ENCODE measurements at regions of chr4 and their contacts with region 1.

Region 1: GRCh38 chr4:122577808-122578781 is 42.8 kb downstream of the IL21 start:
- DNase-seq: peak; percentile 24 to 84 (median 73)
- H3K4me3 ChIP-seq: peak overlapping the region; percentile 49
- H3K4me3 Mint-ChIP-seq: peak overlapping the region; percentile 53 to 82 (median 64)
- H3K27ac ChIP-seq: no peak overlapping the region
- H3K27ac Mint-ChIP-seq: peak overlapping the region; percentile 43 to 92 (median 85)
- H3K4me1 ChIP-seq: peaks cover 20% of the 10 kb centered on the region
- H3K4me1 Mint-ChIP-seq: peaks cover 16 to 32% (median 30%) of the 10 kb centered on the region in 3 donors
- H3K27me3 ChIP-seq: no peaks in the 10 kb centered on the region
- H3K27me3 Mint-ChIP-seq: peaks cover 3 to 5% of the 10 kb centered on the region in 2 donors

Region 2: GRCh38 chr4:121900132-121900983 is 677.7 kb before region 1 on chr4:
- CTCF ChIA-PET with region 1: interaction called, 24 read pairs
- POLR2A ChIA-PET with region 1: no interaction called
- DNase-seq: peak; percentile 33 to 57 (median 38)
- H3K4me3 ChIP-seq: no peak overlapping the region
- H3K4me3 Mint-ChIP-seq: no peak overlapping the region
- H3K27ac ChIP-seq: no peak overlapping the region
- H3K27ac Mint-ChIP-seq: no peak overlapping the region
- H3K4me1 ChIP-seq: peaks cover 3% of the 10 kb centered on the region
- H3K4me1 Mint-ChIP-seq: peaks cover 6 to 8% (median 7%) of the 10 kb centered on the region in 3 donors
- H3K27me3 ChIP-seq: no peaks in the 10 kb centered on the region
- H3K27me3 Mint-ChIP-seq: peaks cover 5 to 12% of the 10 kb centered on the region in 2 donors

Region 3: GRCh38 chr4:121950212-121950679 is 627.8 kb before region 1 on chr4:
- CTCF ChIA-PET with region 1: interaction called, 14 read pairs
- POLR2A ChIA-PET with region 1: no interaction called
- DNase-seq: peak; percentile 68 to 86 (median 75)
- H3K4me3 ChIP-seq: peak overlapping the region; percentile 69
- H3K4me3 Mint-ChIP-seq: peak overlapping the region; percentile 89 to 95 (median 92)
- H3K27ac ChIP-seq: peak overlapping the region; percentile 45
- H3K27ac Mint-ChIP-seq: peak overlapping the region in 6 of 8 donors; percentile 3 to 93 (median 48)
- H3K4me1 ChIP-seq: no peaks in the 10 kb centered on the region
- H3K4me1 Mint-ChIP-seq: peaks cover 4 to 16% (median 12%) of the 10 kb centered on the region in 3 donors
- H3K27me3 ChIP-seq: no peaks in the 10 kb centered on the region
- H3K27me3 Mint-ChIP-seq: peaks cover 1 to 31% of the 10 kb centered on the region in 2 donors

Region 4: GRCh38 chr4:122356317-122356808 is 221.7 kb before region 1 on chr4:
- CTCF ChIA-PET with region 1: interaction called, 13 read pairs
- POLR2A ChIA-PET with region 1: no interaction called
- DNase-seq: no peak
- H3K4me3 ChIP-seq: no peak overlapping the region
- H3K4me3 Mint-ChIP-seq: no peak overlapping the region
- H3K27ac ChIP-seq: no peak overlapping the region
- H3K27ac Mint-ChIP-seq: peak overlapping the region in 1 of 8 donors; percentile 77
- H3K4me1 ChIP-seq: no peaks in the 10 kb centered on the region
- H3K4me1 Mint-ChIP-seq: peaks cover 0 to 14% (median 10%) of the 10 kb centered on the region in 3 donors
- H3K27me3 ChIP-seq: no peaks in the 10 kb centered on the region
- H3K27me3 Mint-ChIP-seq: no peaks in the 10 kb centered on the region

Region 5: GRCh38 chr4:122364700-122365404 is 213.2 kb before region 1 on chr4:
- CTCF ChIA-PET with region 1: interaction called, 13 read pairs
- POLR2A ChIA-PET with region 1: no interaction called
- DNase-seq: peak in 1 of 5 donors; percentile 1
- H3K4me3 ChIP-seq: no peak overlapping the region
- H3K4me3 Mint-ChIP-seq: no peak overlapping the region
- H3K27ac ChIP-seq: no peak overlapping the region
- H3K27ac Mint-ChIP-seq: no peak overlapping the region
- H3K4me1 ChIP-seq: no peaks in the 10 kb centered on the region
- H3K4me1 Mint-ChIP-seq: peaks cover 2 to 18% (median 16%) of the 10 kb centered on the region in 3 donors
- H3K27me3 ChIP-seq: no peaks in the 10 kb centered on the region
- H3K27me3 Mint-ChIP-seq: peaks cover 0 to 6% of the 10 kb centered on the region in 2 donors

Region 6: GRCh38 chr4:122403861-122404260 is 174.2 kb before region 1 on chr4:
- CTCF ChIA-PET with region 1: no interaction called
- POLR2A ChIA-PET with region 1: no interaction called
- DNase-seq: no peak
- H3K4me3 ChIP-seq: no peak overlapping the region
- H3K4me3 Mint-ChIP-seq: no peak overlapping the region
- H3K27ac ChIP-seq: no peak overlapping the region
- H3K27ac Mint-ChIP-seq: no peak overlapping the region
- H3K4me1 ChIP-seq: no peaks in the 10 kb centered on the region
- H3K4me1 Mint-ChIP-seq: no peaks in the 10 kb centered on the region
- H3K27me3 ChIP-seq: no peaks in the 10 kb centered on the region
- H3K27me3 Mint-ChIP-seq: peaks cover 0 to 4% of the 10 kb centered on the region in 2 donors

Region 7: DNA sequence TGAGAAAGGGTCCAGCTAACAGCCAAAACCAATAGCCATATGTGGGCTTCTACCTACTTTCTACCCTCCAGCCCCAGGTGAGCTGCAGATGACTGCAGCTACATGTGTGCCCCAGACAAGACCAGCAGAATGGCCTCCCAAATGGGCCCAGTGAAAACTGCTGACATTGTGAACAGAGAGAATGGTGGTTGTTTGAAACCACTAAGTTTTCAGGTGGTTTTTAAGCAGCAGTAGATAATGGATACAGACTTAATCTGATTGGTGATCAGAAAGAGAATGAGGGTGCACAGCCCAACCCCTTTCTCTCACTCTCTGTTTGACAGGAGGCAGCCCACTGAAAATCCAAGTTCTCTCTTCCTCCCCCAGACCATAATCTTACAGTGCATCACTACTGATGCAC is 111.9 kb after region 1 on chr4:
- CTCF ChIA-PET with region 1: no interaction called
- POLR2A ChIA-PET with region 1: no interaction called
- DNase-seq: no peak
- H3K4me3 ChIP-seq: no peak overlapping the region
- H3K4me3 Mint-ChIP-seq: peak overlapping the region in 2 of 7 donors; percentile 51 to 58
- H3K27ac ChIP-seq: no peak overlapping the region
- H3K27ac Mint-ChIP-seq: peak overlapping the region in 1 of 8 donors; percentile 81
- H3K4me1 ChIP-seq: no peaks in the 10 kb centered on the region
- H3K4me1 Mint-ChIP-seq: peaks cover 13 to 28% (median 26%) of the 10 kb centered on the region in 3 donors
- H3K27me3 ChIP-seq: no peaks in the 10 kb centered on the region
- H3K27me3 Mint-ChIP-seq: peaks cover 2 to 9% of the 10 kb centered on the region in 2 donors

Measured in CD8-positive, alpha-beta memory T cell (primary cell).